ENCODE measurements at regions of chr13 and their contacts with region 1.

Region 1: GRCh38 chr13:100808330-100809266 is 134.0 kb upstream of the TMTC4 start:
- DNase-seq: no peak
- H3K4me3 ChIP-seq: peak overlapping the region in 1 of 59 donors; percentile 27
- H3K27ac ChIP-seq: peak overlapping the region in 49 of 59 donors; percentile 4 to 81 (median 59)
- H3K27me3 ChIP-seq: peaks cover 0 to 3% (median 0%) of the 10 kb centered on the region in 45 donors
- CTCF ChIP-seq: no peak

Region 2: GRCh38 chr13:99969919-99970621 is 838.5 kb before region 1 on chr13:
- intact Hi-C with region 1: no loop called
- DNase-seq: peak in 1 of 10 donors; percentile 72
- H3K4me3 ChIP-seq: peak overlapping the region; percentile 34 to 72 (median 57)
- H3K27ac ChIP-seq: peak overlapping the region in 57 of 59 donors; percentile 38 to 97 (median 89)
- H3K27me3 ChIP-seq: peaks cover 0 to 97% (median 86%) of the 10 kb centered on the region in 45 donors
- CTCF ChIP-seq: no peak

Region 3: GRCh38 chr13:100035919-100036318 is 772.7 kb before region 1 on chr13:
- intact Hi-C with region 1: no loop called
- DNase-seq: no peak
- H3K4me3 ChIP-seq: no peak overlapping the region
- H3K27ac ChIP-seq: no peak overlapping the region
- H3K27me3 ChIP-seq: no peaks in the 10 kb centered on the region
- CTCF ChIP-seq: no peak

Region 4: DNA sequence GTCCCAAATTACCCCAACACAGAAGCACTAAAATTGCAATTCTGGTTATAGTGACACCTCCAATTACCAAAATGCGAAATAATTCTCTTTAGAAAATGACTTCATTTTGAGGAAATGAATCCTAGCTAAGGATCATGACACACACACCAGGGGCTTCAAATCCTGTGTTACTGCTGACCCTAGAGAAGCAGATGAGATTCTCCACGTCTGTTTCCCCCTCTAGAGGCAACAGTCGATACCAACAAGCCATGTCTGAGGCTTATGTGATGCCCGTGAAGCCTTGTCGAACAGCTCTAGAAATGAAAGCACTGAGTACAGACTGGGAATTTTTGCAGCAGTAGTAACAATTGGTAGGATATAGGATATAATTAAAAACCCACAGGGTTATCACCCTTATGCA is 19.6 kb after region 1 on chr13:
- intact Hi-C with region 1: no loop called
- DNase-seq: no peak
- H3K4me3 ChIP-seq: no peak overlapping the region
- H3K27ac ChIP-seq: peak overlapping the region in 5 of 59 donors; percentile 13 to 27 (median 23)
- H3K27me3 ChIP-seq: no peaks in the 10 kb centered on the region
- CTCF ChIP-seq: peak in 26 of 56 donors; percentile 5 to 64 (median 28)

Region 5: DNA sequence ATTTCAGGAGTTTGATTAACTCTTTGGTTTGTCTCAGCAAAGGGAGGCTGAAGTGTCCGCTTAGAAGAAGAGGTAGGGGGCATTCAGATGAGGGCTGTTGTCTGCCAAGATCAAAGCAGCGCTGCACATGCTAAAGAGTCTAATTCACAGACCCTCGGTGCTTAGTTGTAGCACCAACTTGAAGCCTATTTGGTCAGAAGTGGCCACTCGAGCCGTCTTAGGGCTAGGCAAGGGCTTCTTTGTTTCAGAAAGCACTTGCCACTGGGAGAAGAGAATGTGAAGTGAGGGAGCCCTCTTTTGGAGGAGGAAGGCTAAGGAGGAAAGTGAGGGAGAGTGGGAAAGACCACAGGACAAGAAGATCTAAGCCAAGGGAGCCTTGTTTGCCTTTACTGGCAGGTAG is 179.4 kb after region 1 on chr13:
- intact Hi-C with region 1: loop called in 1 of 2 experiments (anchors 10 kb)
- DNase-seq: peak in 1 of 10 donors; percentile 12
- H3K4me3 ChIP-seq: peak overlapping the region in 1 of 59 donors; percentile 38
- H3K27ac ChIP-seq: no peak overlapping the region
- H3K27me3 ChIP-seq: peaks cover 0 to 1% (median 0%) of the 10 kb centered on the region in 45 donors
- CTCF ChIP-seq: peak in 53 of 56 donors; percentile 23 to 68 (median 47)